K562 (cell line): ENCODE measurements at regions of chr5 and their contacts with region 1.

Region 1: GRCh38 chr5:79974891-79975290 is 16.2 kb downstream of the MTX3 start:
- DNase-seq: no peak
- ATAC-seq: no peak
- H3K4me3 ChIP-seq: no peak overlapping the region
- H3K27ac ChIP-seq: no peak overlapping the region
- H3K4me1 ChIP-seq: no peaks in the 10 kb centered on the region
- H3K27me3 ChIP-seq: peaks cover 0 to 17% of the 10 kb centered on the region in 2 experiments; a peak in 4 of 5 replicates
- CTCF ChIP-seq: no peak
- EP300 ChIP-seq: no peak
- POLR2A ChIP-seq: no peak
- RAD21 ChIP-seq: no peak

Region 2: GRCh38 chr5:79886925-79887655 is 87.8 kb before region 1 on chr5:
- CTCF ChIA-PET with region 1: no interaction called
- POLR2A ChIA-PET with region 1: no interaction called
- in situ Hi-C with region 1: no loop called
- intact Hi-C with region 1: no loop called
- DNase-seq: no peak
- ATAC-seq: no peak
- H3K4me3 ChIP-seq: no peak overlapping the region
- H3K27ac ChIP-seq: no peak overlapping the region
- H3K4me1 ChIP-seq: no peaks in the 10 kb centered on the region
- H3K27me3 ChIP-seq: peaks cover 3 to 11% of the 10 kb centered on the region in 2 experiments; a peak in 3 of 5 replicates
- CTCF ChIP-seq: no peak
- EP300 ChIP-seq: no peak
- POLR2A ChIP-seq: no peak
- RAD21 ChIP-seq: no peak

Region 3: DNA sequence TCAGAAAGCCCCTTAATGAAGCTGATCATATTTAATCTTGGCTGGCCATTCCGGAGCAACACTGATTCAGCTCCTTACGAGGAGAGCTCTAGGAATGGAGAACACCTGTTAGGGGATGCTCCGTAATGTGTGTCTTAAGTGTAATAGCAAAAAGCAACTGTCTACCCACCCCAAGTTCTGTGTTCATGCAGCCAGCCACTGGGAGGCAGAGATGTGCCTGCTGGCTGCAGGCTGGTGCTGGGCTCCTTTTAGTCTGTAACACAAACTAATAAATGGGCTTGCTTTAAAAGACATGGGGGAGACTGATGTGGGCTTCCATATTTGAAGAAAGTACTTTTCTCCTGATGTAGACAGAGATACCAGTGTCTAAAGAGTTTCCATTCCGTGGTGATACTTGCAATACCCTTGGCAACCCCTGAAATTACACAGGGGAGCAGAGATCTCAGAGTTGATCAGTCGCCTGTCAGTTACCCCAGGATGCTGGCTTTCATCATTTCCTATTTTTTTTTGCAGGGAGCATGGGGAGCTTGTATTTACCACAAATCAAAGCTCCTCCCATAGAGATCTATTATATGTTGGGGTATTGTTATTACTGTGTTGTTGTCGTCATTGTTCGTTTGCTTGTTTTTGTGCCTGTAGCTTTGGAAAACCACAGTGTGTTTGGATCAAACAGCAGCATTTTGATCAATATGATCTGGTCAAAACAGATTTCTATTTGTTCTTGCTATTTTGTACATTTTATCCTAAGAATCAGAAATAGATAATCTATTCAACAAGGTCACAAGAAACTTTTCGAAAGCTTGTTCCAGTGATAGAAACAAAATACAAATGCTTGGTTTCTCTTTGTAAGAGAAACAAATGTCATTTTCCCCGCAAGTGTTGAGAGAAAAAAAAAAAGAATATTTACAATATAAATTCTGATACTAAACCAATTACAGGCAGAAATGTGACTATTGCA is 49.7 kb before region 1 on chr5:
- CTCF ChIA-PET with region 1: no interaction called
- POLR2A ChIA-PET with region 1: interaction called, 4 read pairs
- in situ Hi-C with region 1: no loop called
- intact Hi-C with region 1: loop called (anchors 5 kb)
- DNase-seq: no peak
- ATAC-seq: no peak
- H3K4me3 ChIP-seq: no peak overlapping the region
- H3K27ac ChIP-seq: no peak overlapping the region
- H3K4me1 ChIP-seq: no peaks in the 10 kb centered on the region
- H3K27me3 ChIP-seq: no peaks in the 10 kb centered on the region
- CTCF ChIP-seq: peak; percentile 22 to 30 (median 29); a peak in 2 of 6 replicates
- EP300 ChIP-seq: no peak
- POLR2A ChIP-seq: no peak
- RAD21 ChIP-seq: peak in 1 of 2 experiments; percentile 33; a peak in 1 of 4 replicates